Ovary (tissue), 10 donors: ENCODE measurements at regions of chr16 and their contacts with region 1.

Region 1: DNA sequence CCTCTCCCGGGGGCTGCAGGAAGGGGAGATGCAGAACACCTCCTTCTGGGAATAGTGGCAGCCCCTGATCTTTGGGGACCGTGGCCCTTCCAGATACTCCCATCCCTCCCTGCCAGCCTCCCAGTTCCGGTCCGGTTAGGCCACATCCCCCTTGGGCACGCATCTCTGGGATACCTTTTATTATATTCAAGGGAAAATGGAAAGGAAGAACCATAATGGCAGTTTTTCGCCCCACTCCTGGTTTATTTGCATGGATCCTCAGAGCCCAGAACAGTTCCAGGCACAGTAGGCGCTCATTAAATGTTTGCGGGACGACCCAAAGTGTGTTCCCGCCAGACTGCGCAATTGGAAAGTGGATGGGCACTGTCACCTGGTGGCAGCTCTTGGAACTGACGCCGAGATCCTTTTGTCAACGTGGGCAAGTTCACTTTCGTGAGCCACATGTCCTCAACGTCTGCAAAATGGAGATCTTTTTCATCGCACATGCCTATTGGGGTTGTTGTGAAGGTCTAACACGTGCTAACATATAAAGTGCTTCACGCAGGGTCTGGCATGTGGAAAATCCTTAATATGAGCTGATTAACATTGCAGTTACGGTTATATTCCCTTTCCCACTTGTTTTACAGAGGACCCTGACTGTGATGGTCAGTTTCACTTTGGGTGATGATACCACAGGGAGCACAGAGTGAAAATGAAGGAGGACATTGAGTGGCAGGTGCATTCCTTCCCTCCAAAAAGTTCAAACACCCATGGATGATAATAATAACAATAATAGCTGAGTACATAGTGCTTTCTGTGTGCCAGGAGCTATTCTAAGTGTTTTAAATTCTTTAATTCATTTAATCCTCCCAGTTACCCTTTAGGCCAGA is 1.7 kb upstream of the GPRC5B start:
- DNase-seq: peak; percentile 75 to 89 (median 86)
- H3K4me3 ChIP-seq: peak overlapping the region; percentile 62
- H3K27ac ChIP-seq: peak overlapping the region in 1 of 2 donors; percentile 48
- H3K4me1 ChIP-seq: peaks cover 14% of the 10 kb centered on the region
- H3K27me3 ChIP-seq: no peaks in the 10 kb centered on the region
- CTCF ChIP-seq: peak; percentile 98 to 99 (median 99)
- EP300 ChIP-seq: no peak
- POLR2A ChIP-seq: no peak

Region 2: DNA sequence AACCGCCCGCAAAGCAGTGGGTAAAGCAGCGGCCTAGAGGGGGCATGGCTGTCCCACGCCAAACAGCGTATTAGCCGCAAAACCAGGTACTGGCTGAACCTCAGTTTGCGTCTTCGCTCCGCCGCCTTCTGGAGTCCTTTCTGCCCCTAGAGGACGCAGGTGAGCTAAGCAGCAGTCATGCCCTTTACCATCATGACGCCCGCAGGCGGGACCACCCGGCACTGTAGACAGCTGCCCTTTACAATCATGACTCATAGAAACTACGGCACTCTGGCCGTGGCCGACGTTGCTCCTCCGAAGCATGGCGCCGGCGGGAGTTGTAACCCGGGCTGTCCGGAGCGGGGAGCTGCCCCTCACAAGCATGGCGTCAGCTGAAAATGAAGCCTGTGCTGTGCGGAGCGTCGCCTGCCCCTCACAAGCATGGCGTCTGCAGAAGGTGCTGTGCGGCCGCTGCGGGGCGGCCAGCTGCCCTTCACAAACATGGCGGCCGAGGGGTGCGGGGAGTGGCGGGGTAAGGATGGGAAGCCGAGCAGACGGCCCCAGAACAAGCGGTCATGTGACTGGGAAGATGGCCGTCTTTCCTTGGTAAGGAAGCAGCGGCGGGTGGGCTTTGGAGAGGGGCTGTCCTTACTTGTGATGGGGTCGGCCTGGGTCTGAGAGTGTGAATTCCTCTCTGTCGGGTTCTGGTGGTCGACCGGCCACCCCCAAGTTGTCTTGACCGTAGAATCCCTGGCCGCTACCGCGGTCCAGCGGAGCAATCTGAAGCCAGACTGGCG is 331.0 kb before region 1 on chr16 and contains the start of gene VPS35L:
- intact Hi-C with region 1: loop called in 2 of 4 experiments (anchors 2 to 5 kb)
- DNase-seq: peak; percentile 97 to 99 (median 99)
- H3K4me3 ChIP-seq: peak within 1 kb of the TSS; percentile 80
- H3K27ac ChIP-seq: peak within 1 kb of the TSS; percentile 70 to 86
- H3K4me1 ChIP-seq: peaks cover 6% of the 10 kb centered on the region
- H3K27me3 ChIP-seq: no peaks in the 10 kb centered on the region
- CTCF ChIP-seq: peak; percentile 74 to 85 (median 78)
- EP300 ChIP-seq: no peak
- POLR2A ChIP-seq: no peak
- total RNA-seq, gene VPS35L: 28.6 to 63.0 (median 50.7) TPM

Region 3: GRCh38 chr16:19563377-19563776 is 322.9 kb before region 1 on chr16:
- intact Hi-C with region 1: loop called in 2 of 4 experiments (anchors 2 to 5 kb)
- DNase-seq: no peak
- H3K4me3 ChIP-seq: no peak overlapping the region
- H3K27ac ChIP-seq: no peak overlapping the region
- H3K4me1 ChIP-seq: peaks cover 3% of the 10 kb centered on the region
- H3K27me3 ChIP-seq: no peaks in the 10 kb centered on the region
- CTCF ChIP-seq: no peak
- EP300 ChIP-seq: no peak
- POLR2A ChIP-seq: no peak

Region 4: DNA sequence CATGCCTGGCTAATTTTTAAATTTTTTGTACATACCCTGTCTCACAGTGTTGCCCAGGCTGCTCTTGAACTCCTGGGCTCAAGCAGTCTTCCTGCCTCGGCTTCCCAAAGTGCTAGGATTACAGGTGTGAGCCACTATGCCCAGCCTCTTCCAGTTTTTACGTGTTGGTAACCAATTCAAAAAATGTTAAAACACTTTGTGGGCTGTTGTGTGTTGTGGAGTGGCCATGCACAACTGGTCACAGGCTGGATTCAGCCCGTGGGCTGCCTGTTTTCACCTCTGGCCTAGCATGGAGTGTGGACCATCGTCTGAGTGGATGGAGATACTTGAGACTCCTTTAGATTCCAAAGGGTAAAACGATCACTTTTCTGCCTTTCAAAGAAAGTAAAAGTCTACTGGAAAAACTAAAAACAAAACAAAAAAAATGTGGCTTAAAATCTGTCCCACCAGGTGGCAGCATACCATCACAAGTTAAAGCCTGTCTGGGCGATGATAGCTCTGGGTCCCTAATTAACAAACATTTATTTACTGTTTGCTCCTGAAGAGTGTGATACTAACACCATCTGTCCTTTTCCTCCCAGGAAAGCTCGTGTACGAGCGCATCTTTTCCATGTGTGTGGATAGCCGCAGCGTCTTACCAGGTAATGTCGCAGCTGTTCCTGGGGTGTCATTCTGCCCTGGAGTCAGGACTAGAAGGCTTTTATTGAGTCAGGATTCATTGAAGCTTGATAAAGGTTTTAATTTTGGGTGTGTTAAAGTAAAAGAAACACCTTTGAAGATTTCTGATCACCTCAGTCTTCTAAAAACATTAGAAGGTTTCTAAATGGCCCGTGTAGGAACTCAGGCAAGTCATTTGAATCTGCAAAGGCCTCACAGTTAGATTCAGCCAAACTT is 285.0 kb before region 1 on chr16:
- intact Hi-C with region 1: loop called (anchors 2 to 5 kb)
- DNase-seq: peak in 3 of 5 donors; percentile 37 to 63 (median 49)
- H3K4me3 ChIP-seq: no peak overlapping the region
- H3K27ac ChIP-seq: peak overlapping the region in 1 of 2 donors; percentile 24
- H3K4me1 ChIP-seq: peaks cover 4% of the 10 kb centered on the region
- H3K27me3 ChIP-seq: no peaks in the 10 kb centered on the region
- CTCF ChIP-seq: peak; percentile 68 to 85 (median 74)
- EP300 ChIP-seq: no peak
- POLR2A ChIP-seq: no peak

Region 5: GRCh38 chr16:19717771-19718602 is 168.3 kb before region 1 on chr16 and contains the starts of genes IQCK and KNOP1:
- intact Hi-C with region 1: loop called in 1 of 4 experiments (anchors 5 kb)
- DNase-seq: peak; percentile 91 to 94 (median 92)
- H3K4me3 ChIP-seq: peak within 1 kb of the TSS; percentile 67
- H3K27ac ChIP-seq: peak within 1 kb of the TSS in 1 of 2 donors; percentile 72
- H3K4me1 ChIP-seq: peaks cover 13% of the 10 kb centered on the region
- H3K27me3 ChIP-seq: no peaks in the 10 kb centered on the region
- CTCF ChIP-seq: peak in 1 of 3 donors; percentile 12
- EP300 ChIP-seq: no peak
- POLR2A ChIP-seq: peak; percentile 70
- total RNA-seq, gene IQCK: 14.3 to 52.8 (median 18.0) TPM
- total RNA-seq, gene KNOP1: 6.4 to 21.9 (median 16.7) TPM